Transverse colon (tissue), 4 donors: ENCODE measurements at regions of chr10 and their contacts with region 1.

Region 1: GRCh38 chr10:51602326-51602725 is 97.1 kb downstream of the CSTF2T start:
- DNase-seq: no peak
- H3K4me3 ChIP-seq: no peak overlapping the region
- H3K27ac ChIP-seq: no peak overlapping the region
- H3K4me1 ChIP-seq: no peaks in the 10 kb centered on the region
- H3K27me3 ChIP-seq: no peaks in the 10 kb centered on the region
- CTCF ChIP-seq: no peak
- EP300 ChIP-seq: no peak
- POLR2A ChIP-seq: no peak

Region 2: DNA sequence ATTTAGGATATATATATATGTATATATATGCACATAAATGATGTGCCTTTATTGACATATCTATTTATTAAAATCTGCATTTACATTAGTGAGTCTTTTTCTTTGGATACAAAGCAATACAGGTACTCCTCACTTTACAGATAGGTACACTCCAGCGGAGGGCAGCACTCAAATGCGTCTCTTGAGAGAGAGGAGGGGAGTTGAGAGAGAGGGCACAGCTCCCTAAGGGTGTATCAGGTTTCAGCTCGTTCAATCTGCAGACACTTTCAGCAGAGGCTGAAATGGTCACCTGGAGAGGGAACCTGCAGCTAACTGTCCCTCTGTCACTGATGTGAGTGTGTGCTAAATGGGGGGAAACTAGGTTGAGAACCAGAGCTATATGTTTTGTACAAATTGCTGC is 1901.3 kb before region 1 on chr10:
- in situ Hi-C with region 1: no loop called
- intact Hi-C with region 1: loop called (anchors 10 kb)
- DNase-seq: no peak
- H3K4me3 ChIP-seq: no peak overlapping the region
- H3K27ac ChIP-seq: no peak overlapping the region
- H3K4me1 ChIP-seq: no peaks in the 10 kb centered on the region
- H3K27me3 ChIP-seq: no peaks in the 10 kb centered on the region
- CTCF ChIP-seq: no peak
- EP300 ChIP-seq: no peak
- POLR2A ChIP-seq: no peak

Region 3: DNA sequence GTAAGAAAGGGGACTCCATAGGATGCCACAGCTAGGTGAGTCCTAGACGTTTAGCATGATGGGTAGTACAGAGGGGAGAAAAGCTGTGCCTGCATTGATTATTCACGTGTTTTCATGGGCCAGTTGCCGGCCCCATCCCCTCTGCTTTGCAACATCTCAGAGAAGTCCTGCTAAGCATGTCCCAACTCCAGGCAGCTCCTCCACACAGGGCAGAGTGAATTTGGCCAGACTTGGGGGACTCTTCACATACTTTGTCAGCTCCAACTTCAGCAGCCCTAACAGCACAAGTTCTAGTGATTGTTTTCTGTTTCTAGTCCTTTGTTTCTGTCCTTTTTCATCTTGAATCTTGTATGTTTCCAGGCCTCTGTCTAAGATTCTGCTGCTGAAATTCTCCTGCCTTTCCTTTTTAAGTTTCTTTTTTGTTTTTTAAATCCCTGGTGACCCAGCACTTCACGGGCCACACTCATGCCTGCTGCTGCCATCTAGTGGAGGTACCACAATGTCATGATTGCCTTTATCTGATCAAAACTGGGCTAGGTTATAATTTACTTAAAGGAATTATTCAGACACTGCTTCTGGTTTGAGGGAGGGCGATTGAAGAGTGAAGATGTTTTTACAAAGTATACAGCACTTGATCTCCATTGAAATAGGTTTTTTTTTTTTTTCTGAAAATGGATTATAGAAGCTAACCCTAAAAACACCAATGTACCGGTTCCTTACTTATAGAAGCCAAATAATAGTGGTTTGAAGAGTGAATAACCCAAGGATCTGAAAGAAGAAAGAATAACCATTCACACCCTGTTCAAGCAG is 179.8 kb before region 1 on chr10:
- in situ Hi-C with region 1: no loop called
- intact Hi-C with region 1: no loop called
- DNase-seq: peak; percentile 63
- H3K4me3 ChIP-seq: no peak overlapping the region
- H3K27ac ChIP-seq: peak overlapping the region; percentile 7 to 40 (median 20)
- H3K4me1 ChIP-seq: peaks cover 0 to 14% (median 9%) of the 10 kb centered on the region in 4 donors
- H3K27me3 ChIP-seq: no peaks in the 10 kb centered on the region
- CTCF ChIP-seq: peak; percentile 68 to 77 (median 74)
- EP300 ChIP-seq: no peak
- POLR2A ChIP-seq: no peak

Region 4: GRCh38 chr10:51706225-51706624 is 103.9 kb after region 1 on chr10:
- in situ Hi-C with region 1: no loop called
- intact Hi-C with region 1: no loop called
- DNase-seq: peak; percentile 69
- H3K4me3 ChIP-seq: no peak overlapping the region
- H3K27ac ChIP-seq: peak overlapping the region; percentile 42 to 73 (median 70)
- H3K4me1 ChIP-seq: peaks cover 0 to 12% (median 0%) of the 10 kb centered on the region in 4 donors
- H3K27me3 ChIP-seq: no peaks in the 10 kb centered on the region
- CTCF ChIP-seq: no peak
- EP300 ChIP-seq: no peak
- POLR2A ChIP-seq: no peak